Naive thymus-derived CD4-positive, alpha-beta T cell (primary cell): ENCODE measurements at regions of chrX and their contacts with region 1.

Region 1: DNA sequence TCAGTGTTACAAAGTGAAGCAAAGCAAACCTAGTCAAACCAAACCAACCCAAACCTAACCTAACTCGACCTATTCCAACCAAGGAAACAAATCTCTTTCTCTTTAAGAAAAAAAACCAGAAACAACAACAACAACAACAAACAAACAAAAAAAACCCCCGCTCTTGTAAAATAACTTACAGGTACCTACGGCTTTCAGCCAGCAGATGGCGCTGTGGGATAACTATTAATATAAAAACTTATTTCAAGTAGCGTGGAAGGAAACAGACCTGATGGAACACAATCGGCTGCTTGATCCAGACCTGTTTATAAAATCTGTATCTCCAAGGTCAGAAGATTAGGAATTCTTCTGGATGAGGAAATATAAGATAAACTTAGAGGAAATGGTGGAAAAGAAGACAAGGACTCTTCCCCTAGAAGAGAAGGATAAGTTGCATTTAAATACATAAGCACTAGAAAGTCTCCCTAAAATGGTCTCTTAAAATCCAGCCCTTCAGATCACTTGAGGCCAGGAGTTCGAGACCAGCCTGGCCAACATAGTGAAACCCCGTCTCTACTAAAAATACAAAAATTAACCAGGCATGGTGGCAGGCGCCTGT is 34.4 kb upstream of the CDKL5 start:
- DNase-seq: peak; percentile 12 to 69 (median 60)
- ATAC-seq: peak; percentile 60
- H3K4me3 ChIP-seq: no peak overlapping the region
- H3K4me3 Mint-ChIP-seq: no peak overlapping the region
- H3K27ac ChIP-seq: no peak overlapping the region
- H3K27ac Mint-ChIP-seq: peak overlapping the region in 2 of 9 donors; percentile 2 to 19
- H3K4me1 ChIP-seq: no peaks in the 10 kb centered on the region
- H3K4me1 Mint-ChIP-seq: peaks cover 0 to 6% (median 5%) of the 10 kb centered on the region in 7 donors
- H3K27me3 ChIP-seq: no peaks in the 10 kb centered on the region
- H3K27me3 Mint-ChIP-seq: no peaks in the 10 kb centered on the region

Region 2: DNA sequence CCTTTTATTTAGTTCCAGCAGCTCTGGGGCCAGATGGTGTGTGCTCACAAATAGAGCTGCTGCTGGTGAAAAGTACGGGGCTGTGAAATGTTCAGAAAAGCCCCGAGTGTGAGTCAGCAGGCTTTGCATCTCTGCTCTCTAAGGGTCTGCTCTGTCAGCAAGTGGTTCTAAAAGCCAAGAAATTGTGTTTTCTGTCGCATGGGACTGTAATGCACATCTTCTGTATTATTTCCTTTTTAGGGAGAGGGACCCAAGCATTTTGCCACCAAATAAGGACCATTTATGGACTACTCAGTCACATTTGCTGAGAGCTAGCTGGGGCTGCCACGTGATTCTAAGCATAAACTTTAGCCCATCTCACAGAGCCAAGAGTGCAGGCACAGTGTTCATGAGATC is 1098.9 kb before region 1 on chrX:
- CTCF ChIA-PET with region 1: no interaction called
- POLR2A ChIA-PET with region 1: no interaction called
- intact Hi-C with region 1: no loop called
- DNase-seq: no peak
- ATAC-seq: no peak
- H3K4me3 ChIP-seq: no peak overlapping the region
- H3K4me3 Mint-ChIP-seq: no peak overlapping the region
- H3K27ac ChIP-seq: no peak overlapping the region
- H3K27ac Mint-ChIP-seq: no peak overlapping the region
- H3K4me1 ChIP-seq: no peaks in the 10 kb centered on the region
- H3K4me1 Mint-ChIP-seq: no peaks in the 10 kb centered on the region
- H3K27me3 ChIP-seq: no peaks in the 10 kb centered on the region
- H3K27me3 Mint-ChIP-seq: peaks cover 0 to 11% (median 8%) of the 10 kb centered on the region in 5 donors

Region 3: DNA sequence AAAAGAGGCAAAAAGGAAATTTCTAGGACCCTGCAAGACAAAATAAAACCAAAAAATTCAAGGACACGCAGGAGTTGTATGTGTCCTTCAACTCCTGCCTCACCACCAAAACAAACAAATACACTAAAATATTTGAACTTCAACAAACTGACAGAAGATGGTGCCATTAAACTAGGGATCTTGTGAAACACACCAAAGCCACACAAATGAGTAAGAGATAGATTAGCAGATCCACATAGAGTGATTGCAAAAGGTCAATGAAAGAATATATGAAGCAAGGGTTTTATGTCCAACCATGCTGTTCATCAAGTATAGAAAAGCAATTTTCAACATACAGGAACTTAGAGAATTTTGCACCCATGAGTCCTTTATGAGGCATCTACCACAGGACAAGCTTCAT is 693.8 kb before region 1 on chrX:
- CTCF ChIA-PET with region 1: no interaction called
- POLR2A ChIA-PET with region 1: no interaction called
- intact Hi-C with region 1: loop called in 1 of 2 experiments (anchors 5 kb)
- DNase-seq: peak in 5 of 9 donors; percentile 0 to 28 (median 14)
- ATAC-seq: no peak
- H3K4me3 ChIP-seq: no peak overlapping the region
- H3K4me3 Mint-ChIP-seq: no peak overlapping the region
- H3K27ac ChIP-seq: no peak overlapping the region
- H3K27ac Mint-ChIP-seq: no peak overlapping the region
- H3K4me1 ChIP-seq: no peaks in the 10 kb centered on the region
- H3K4me1 Mint-ChIP-seq: no peaks in the 10 kb centered on the region
- H3K27me3 ChIP-seq: no peaks in the 10 kb centered on the region
- H3K27me3 Mint-ChIP-seq: no peaks in the 10 kb centered on the region

Region 4: DNA sequence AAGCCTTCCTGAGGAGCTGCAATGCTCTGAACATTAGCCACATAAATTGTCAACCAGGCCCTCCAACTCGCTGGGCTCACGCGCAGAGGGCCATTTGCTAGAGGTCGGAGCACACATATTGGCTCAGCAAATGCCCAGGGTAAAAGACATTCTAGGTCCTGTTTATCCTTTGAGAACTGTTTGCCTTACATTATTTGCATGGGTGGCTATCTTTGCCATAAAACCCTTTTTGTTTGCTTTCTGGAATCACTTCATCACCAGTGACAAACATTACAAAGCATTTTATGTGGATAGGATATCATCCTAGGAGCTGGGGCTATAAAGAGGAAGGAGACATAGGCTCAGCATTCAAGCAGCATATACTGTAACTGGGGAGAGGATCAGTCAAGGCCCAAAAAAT is 380.8 kb before region 1 on chrX:
- CTCF ChIA-PET with region 1: no interaction called
- POLR2A ChIA-PET with region 1: no interaction called
- intact Hi-C with region 1: no loop called
- DNase-seq: no peak
- ATAC-seq: no peak
- H3K4me3 ChIP-seq: no peak overlapping the region
- H3K4me3 Mint-ChIP-seq: no peak overlapping the region
- H3K27ac ChIP-seq: no peak overlapping the region
- H3K27ac Mint-ChIP-seq: no peak overlapping the region
- H3K4me1 ChIP-seq: no peaks in the 10 kb centered on the region
- H3K4me1 Mint-ChIP-seq: no peaks in the 10 kb centered on the region
- H3K27me3 ChIP-seq: no peaks in the 10 kb centered on the region
- H3K27me3 Mint-ChIP-seq: peaks cover 0 to 2% (median 0%) of the 10 kb centered on the region in 5 donors

Region 5: DNA sequence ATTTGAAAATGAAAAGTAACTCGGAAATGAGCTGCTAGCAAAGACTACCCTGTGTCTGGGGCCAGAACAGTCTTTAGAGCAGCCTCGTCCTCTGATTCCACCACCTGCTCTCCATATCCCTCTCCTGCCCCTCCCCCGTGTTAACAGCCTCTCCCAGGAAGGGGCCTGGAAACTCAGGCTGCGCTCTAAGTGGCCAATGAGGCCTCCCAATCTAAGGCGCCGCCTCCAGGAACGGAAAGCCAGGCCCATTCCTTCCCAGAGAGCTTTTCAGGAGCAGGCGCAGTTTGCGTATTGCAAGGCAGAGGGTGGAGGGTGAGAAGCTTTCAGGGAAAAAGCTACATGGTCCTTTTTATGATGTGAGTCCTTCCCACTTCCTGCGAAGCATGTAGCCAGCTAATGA is 249.6 kb after region 1 on chrX:
- CTCF ChIA-PET with region 1: no interaction called
- POLR2A ChIA-PET with region 1: no interaction called
- intact Hi-C with region 1: no loop called
- DNase-seq: no peak
- ATAC-seq: no peak
- H3K4me3 ChIP-seq: no peak overlapping the region
- H3K4me3 Mint-ChIP-seq: no peak overlapping the region
- H3K27ac ChIP-seq: no peak overlapping the region
- H3K27ac Mint-ChIP-seq: no peak overlapping the region
- H3K4me1 ChIP-seq: no peaks in the 10 kb centered on the region
- H3K4me1 Mint-ChIP-seq: no peaks in the 10 kb centered on the region
- H3K27me3 ChIP-seq: no peaks in the 10 kb centered on the region
- H3K27me3 Mint-ChIP-seq: no peaks in the 10 kb centered on the region

Region 6: GRCh38 chrX:18886344-18887161 is 495.5 kb after region 1 on chrX:
- CTCF ChIA-PET with region 1: interaction called, 3 read pairs
- POLR2A ChIA-PET with region 1: no interaction called
- intact Hi-C with region 1: loop called in 1 of 2 experiments (anchors 1 kb)
- DNase-seq: peak; percentile 10 to 47 (median 40)
- ATAC-seq: peak; percentile 79
- H3K4me3 ChIP-seq: peak overlapping the region; percentile 56
- H3K4me3 Mint-ChIP-seq: peak overlapping the region; percentile 84 to 97 (median 90)
- H3K27ac ChIP-seq: peak overlapping the region; percentile 57
- H3K27ac Mint-ChIP-seq: peak overlapping the region; percentile 71 to 95 (median 90)
- H3K4me1 ChIP-seq: peaks cover 6 to 23% of the 10 kb centered on the region in 2 donors
- H3K4me1 Mint-ChIP-seq: peaks cover 11 to 47% (median 37%) of the 10 kb centered on the region in 7 donors
- H3K27me3 ChIP-seq: no peaks in the 10 kb centered on the region
- H3K27me3 Mint-ChIP-seq: no peaks in the 10 kb centered on the region

Region 7: GRCh38 chrX:18899796-18900447 is 508.9 kb after region 1 on chrX:
- CTCF ChIA-PET with region 1: no interaction called
- POLR2A ChIA-PET with region 1: no interaction called
- intact Hi-C with region 1: loop called in 1 of 2 experiments (anchors 1 kb)
- DNase-seq: peak in 4 of 9 donors; percentile 16 to 25 (median 18)
- ATAC-seq: no peak
- H3K4me3 ChIP-seq: no peak overlapping the region
- H3K4me3 Mint-ChIP-seq: no peak overlapping the region
- H3K27ac ChIP-seq: no peak overlapping the region
- H3K27ac Mint-ChIP-seq: peak overlapping the region in 1 of 9 donors; percentile 38
- H3K4me1 ChIP-seq: no peaks in the 10 kb centered on the region
- H3K4me1 Mint-ChIP-seq: peaks cover 0 to 7% (median 0%) of the 10 kb centered on the region in 7 donors
- H3K27me3 ChIP-seq: no peaks in the 10 kb centered on the region
- H3K27me3 Mint-ChIP-seq: no peaks in the 10 kb centered on the region

Region 8: DNA sequence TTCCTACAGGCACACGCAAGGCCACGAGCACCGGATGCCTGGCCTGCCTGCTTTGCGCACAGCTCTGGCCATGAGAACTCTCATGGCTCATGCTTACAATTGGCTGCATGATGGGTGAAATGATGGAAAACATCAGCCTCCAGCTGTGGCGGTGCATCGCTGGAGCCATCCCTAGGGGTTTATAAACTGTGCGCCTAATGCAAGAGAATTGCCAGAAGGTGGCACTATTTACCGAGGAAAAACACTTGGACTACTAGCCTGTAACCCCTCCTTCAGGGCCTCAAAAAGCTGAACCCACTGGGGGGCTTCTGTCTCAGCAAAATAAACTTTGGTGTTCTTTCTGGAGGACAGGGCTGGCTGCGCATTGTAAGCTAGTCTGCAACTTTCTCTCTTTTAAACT is 540.9 kb after region 1 on chrX:
- CTCF ChIA-PET with region 1: no interaction called
- POLR2A ChIA-PET with region 1: no interaction called
- intact Hi-C with region 1: loop called in 1 of 2 experiments (anchors 1 kb)
- DNase-seq: peak in 1 of 9 donors; percentile 5
- ATAC-seq: no peak
- H3K4me3 ChIP-seq: no peak overlapping the region
- H3K4me3 Mint-ChIP-seq: no peak overlapping the region
- H3K27ac ChIP-seq: no peak overlapping the region
- H3K27ac Mint-ChIP-seq: no peak overlapping the region
- H3K4me1 ChIP-seq: no peaks in the 10 kb centered on the region
- H3K4me1 Mint-ChIP-seq: no peaks in the 10 kb centered on the region
- H3K27me3 ChIP-seq: no peaks in the 10 kb centered on the region
- H3K27me3 Mint-ChIP-seq: no peaks in the 10 kb centered on the region